ENCODE measurements at regions of chr16 and their contacts with region 1.

Region 1: GRCh38 chr16:49592546-49593423 is 219.2 kb downstream of the C16orf78 start:
- DNase-seq: no peak
- H3K4me3 ChIP-seq: no peak overlapping the region
- H3K27ac ChIP-seq: no peak overlapping the region
- H3K4me1 ChIP-seq: peaks cover 21% of the 10 kb centered on the region
- H3K27me3 ChIP-seq: peaks cover 22% of the 10 kb centered on the region
- CTCF ChIP-seq: peak; percentile 87

Region 2: GRCh38 chr16:49503256-49504022 is 89.3 kb before region 1 on chr16:
- intact Hi-C with region 1: loop called (anchors 10 kb)
- DNase-seq: no peak
- H3K4me3 ChIP-seq: no peak overlapping the region
- H3K27ac ChIP-seq: no peak overlapping the region
- H3K4me1 ChIP-seq: no peaks in the 10 kb centered on the region
- H3K27me3 ChIP-seq: no peaks in the 10 kb centered on the region
- CTCF ChIP-seq: no peak

Measured in left ventricle myocardium inferior (tissue), 1 donor.